Activated CD4-positive, alpha-beta T cell treated with anti-CD3 and anti-CD28 coated beads, Interleukin-2, amount 10 ng/mL, durations not matched to agents 24 days and 14 days (primary cell): ENCODE measurements at regions of chr7 and their contacts with region 1.

Region 1: GRCh38 chr7:141674702-141675101 is 27.3 kb downstream of the DENND11 start:
- DNase-seq: no peak
- H3K4me3 Mint-ChIP-seq: peak overlapping the region; percentile 8
- H3K27ac Mint-ChIP-seq: peak overlapping the region; percentile 31
- H3K4me1 Mint-ChIP-seq: peaks cover 39% of the 10 kb centered on the region
- H3K27me3 Mint-ChIP-seq: no peaks in the 10 kb centered on the region

Region 2: GRCh38 chr7:141558544-141559183 is 116.0 kb before region 1 on chr7:
- intact Hi-C with region 1: loop called (anchors 5 kb)
- DNase-seq: peak; percentile 79
- H3K4me3 Mint-ChIP-seq: peak overlapping the region; percentile 59
- H3K27ac Mint-ChIP-seq: peak overlapping the region; percentile 86
- H3K4me1 Mint-ChIP-seq: peaks cover 63% of the 10 kb centered on the region
- H3K27me3 Mint-ChIP-seq: no peaks in the 10 kb centered on the region

Region 3: GRCh38 chr7:141701489-141702046 is 26.9 kb after region 1 on chr7:
- intact Hi-C with region 1: loop called (anchors 2 kb)
- DNase-seq: peak; percentile 92
- H3K4me3 Mint-ChIP-seq: peak overlapping the region; percentile 83
- H3K27ac Mint-ChIP-seq: peak overlapping the region; percentile 77
- H3K4me1 Mint-ChIP-seq: peaks cover 42% of the 10 kb centered on the region
- H3K27me3 Mint-ChIP-seq: peaks cover 13% of the 10 kb centered on the region